Natural killer cell (primary cell): ENCODE measurements at regions of chr7 and their contacts with region 1.

Region 1: GRCh38 chr7:50369143-50370026 is 64.9 kb downstream of the IKZF1 start:
- DNase-seq: peak in 1 of 2 donors; percentile 92
- ATAC-seq: peak; percentile 81
- H3K4me3 ChIP-seq: no peak overlapping the region
- H3K4me3 Mint-ChIP-seq: peak overlapping the region; percentile 10
- H3K27ac ChIP-seq: peak overlapping the region; percentile 31
- H3K27ac Mint-ChIP-seq: no peak overlapping the region
- H3K4me1 ChIP-seq: peaks cover 43% of the 10 kb centered on the region
- H3K4me1 Mint-ChIP-seq: peaks cover 81 to 86% of the 10 kb centered on the region in 2 donors
- H3K27me3 ChIP-seq: no peaks in the 10 kb centered on the region
- H3K27me3 Mint-ChIP-seq: no peaks in the 10 kb centered on the region
- CTCF ChIP-seq: peak; percentile 85

Region 2: GRCh38 chr7:50142425-50143017 is 226.9 kb before region 1 on chr7:
- intact Hi-C with region 1: loop called (anchors 1 kb)
- DNase-seq: peak in 1 of 2 donors; percentile 84
- ATAC-seq: peak; percentile 67 to 73 (median 70)
- H3K4me3 ChIP-seq: no peak overlapping the region
- H3K4me3 Mint-ChIP-seq: no peak overlapping the region
- H3K27ac ChIP-seq: no peak overlapping the region
- H3K27ac Mint-ChIP-seq: no peak overlapping the region
- H3K4me1 ChIP-seq: peaks cover 3% of the 10 kb centered on the region
- H3K4me1 Mint-ChIP-seq: peaks cover 4% of the 10 kb centered on the region in 2 donors
- H3K27me3 ChIP-seq: no peaks in the 10 kb centered on the region
- H3K27me3 Mint-ChIP-seq: peaks cover 8 to 14% of the 10 kb centered on the region in 2 donors
- CTCF ChIP-seq: peak; percentile 87

Region 3: GRCh38 chr7:50206453-50207250 is 162.7 kb before region 1 on chr7:
- intact Hi-C with region 1: loop called (anchors 1 kb)
- DNase-seq: peak in 1 of 2 donors; percentile 79
- ATAC-seq: peak; percentile 45 to 68 (median 48)
- H3K4me3 ChIP-seq: no peak overlapping the region
- H3K4me3 Mint-ChIP-seq: peak overlapping the region; percentile 56
- H3K27ac ChIP-seq: peak overlapping the region; percentile 14
- H3K27ac Mint-ChIP-seq: peak overlapping the region; percentile 35 to 83
- H3K4me1 ChIP-seq: peaks cover 45% of the 10 kb centered on the region
- H3K4me1 Mint-ChIP-seq: peaks cover 37 to 45% of the 10 kb centered on the region in 2 donors
- H3K27me3 ChIP-seq: no peaks in the 10 kb centered on the region
- H3K27me3 Mint-ChIP-seq: no peaks in the 10 kb centered on the region
- CTCF ChIP-seq: no peak

Region 4: DNA sequence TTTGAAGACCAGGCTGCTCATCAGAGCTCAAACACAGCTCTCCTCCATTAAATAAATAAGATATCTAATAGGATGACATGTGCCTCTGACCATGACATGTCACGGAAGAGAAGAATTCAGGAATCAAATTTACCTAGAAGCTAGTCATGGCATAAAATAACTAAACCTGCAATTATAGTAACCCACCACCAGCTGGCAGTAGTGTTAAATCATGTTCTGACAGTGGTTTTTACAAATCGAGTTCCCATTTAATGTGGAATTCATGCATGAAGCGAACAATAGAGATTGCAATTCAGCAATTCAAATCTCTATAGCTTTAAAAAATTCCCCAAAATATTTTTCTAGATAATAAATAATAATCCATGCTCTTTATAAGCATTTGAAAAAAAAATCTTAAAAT is 139.4 kb before region 1 on chr7:
- intact Hi-C with region 1: loop called (anchors 1 kb)
- DNase-seq: peak in 1 of 2 donors; percentile 55
- ATAC-seq: no peak
- H3K4me3 ChIP-seq: no peak overlapping the region
- H3K4me3 Mint-ChIP-seq: no peak overlapping the region
- H3K27ac ChIP-seq: no peak overlapping the region
- H3K27ac Mint-ChIP-seq: no peak overlapping the region
- H3K4me1 ChIP-seq: no peaks in the 10 kb centered on the region
- H3K4me1 Mint-ChIP-seq: peaks cover 10 to 14% of the 10 kb centered on the region in 2 donors
- H3K27me3 ChIP-seq: no peaks in the 10 kb centered on the region
- H3K27me3 Mint-ChIP-seq: no peaks in the 10 kb centered on the region
- CTCF ChIP-seq: peak; percentile 45